Natural killer cell (primary cell): ENCODE measurements at regions of chr12 and their contacts with region 1.

Region 1: DNA sequence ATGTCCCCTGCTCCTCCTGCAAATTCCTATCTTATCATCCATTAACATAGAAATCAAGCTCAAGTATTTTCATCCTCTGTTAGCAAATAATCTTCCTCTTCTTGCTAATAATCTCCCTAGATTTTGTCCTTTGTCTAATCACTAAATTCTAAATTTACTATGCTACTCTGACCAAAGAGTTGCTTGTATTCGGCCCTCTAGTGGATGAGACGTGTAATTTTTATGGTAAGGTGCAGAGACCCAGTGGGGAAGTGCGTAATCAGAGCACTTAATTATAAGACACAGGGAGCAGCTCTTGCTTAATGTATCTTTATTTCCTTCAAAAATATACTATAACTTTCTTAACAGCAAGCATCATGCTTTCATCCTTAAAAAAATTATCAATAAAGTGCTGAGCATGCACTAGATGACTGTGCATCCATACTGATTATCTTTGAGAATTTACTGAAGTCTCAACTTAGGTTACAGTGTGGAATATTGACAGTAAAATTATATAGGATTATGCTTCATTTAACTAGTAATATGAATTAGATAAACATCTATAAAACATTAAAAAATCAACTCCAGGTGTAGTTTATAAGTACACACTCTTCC is 212.6 kb downstream of the SLC16A7 start:
- DNase-seq: peak in 1 of 2 donors; percentile 61
- ATAC-seq: peak; percentile 52 to 78 (median 59)
- H3K4me3 ChIP-seq: no peak overlapping the region
- H3K4me3 Mint-ChIP-seq: no peak overlapping the region
- H3K27ac ChIP-seq: no peak overlapping the region
- H3K27ac Mint-ChIP-seq: no peak overlapping the region
- H3K4me1 ChIP-seq: no peaks in the 10 kb centered on the region
- H3K4me1 Mint-ChIP-seq: peaks cover 0 to 5% of the 10 kb centered on the region in 2 donors
- H3K27me3 ChIP-seq: no peaks in the 10 kb centered on the region
- H3K27me3 Mint-ChIP-seq: no peaks in the 10 kb centered on the region
- CTCF ChIP-seq: peak; percentile 85

Region 2: GRCh38 chr12:59403259-59403932 is 405.0 kb before region 1 on chr12:
- intact Hi-C with region 1: loop called (anchors 2 kb)
- DNase-seq: peak in 1 of 2 donors; percentile 72
- ATAC-seq: peak in 1 of 3 donors; percentile 61
- H3K4me3 ChIP-seq: no peak overlapping the region
- H3K4me3 Mint-ChIP-seq: no peak overlapping the region
- H3K27ac ChIP-seq: no peak overlapping the region
- H3K27ac Mint-ChIP-seq: no peak overlapping the region
- H3K4me1 ChIP-seq: no peaks in the 10 kb centered on the region
- H3K4me1 Mint-ChIP-seq: peaks cover 0 to 5% of the 10 kb centered on the region in 2 donors
- H3K27me3 ChIP-seq: no peaks in the 10 kb centered on the region
- H3K27me3 Mint-ChIP-seq: no peaks in the 10 kb centered on the region
- CTCF ChIP-seq: peak; percentile 63

Region 3: DNA sequence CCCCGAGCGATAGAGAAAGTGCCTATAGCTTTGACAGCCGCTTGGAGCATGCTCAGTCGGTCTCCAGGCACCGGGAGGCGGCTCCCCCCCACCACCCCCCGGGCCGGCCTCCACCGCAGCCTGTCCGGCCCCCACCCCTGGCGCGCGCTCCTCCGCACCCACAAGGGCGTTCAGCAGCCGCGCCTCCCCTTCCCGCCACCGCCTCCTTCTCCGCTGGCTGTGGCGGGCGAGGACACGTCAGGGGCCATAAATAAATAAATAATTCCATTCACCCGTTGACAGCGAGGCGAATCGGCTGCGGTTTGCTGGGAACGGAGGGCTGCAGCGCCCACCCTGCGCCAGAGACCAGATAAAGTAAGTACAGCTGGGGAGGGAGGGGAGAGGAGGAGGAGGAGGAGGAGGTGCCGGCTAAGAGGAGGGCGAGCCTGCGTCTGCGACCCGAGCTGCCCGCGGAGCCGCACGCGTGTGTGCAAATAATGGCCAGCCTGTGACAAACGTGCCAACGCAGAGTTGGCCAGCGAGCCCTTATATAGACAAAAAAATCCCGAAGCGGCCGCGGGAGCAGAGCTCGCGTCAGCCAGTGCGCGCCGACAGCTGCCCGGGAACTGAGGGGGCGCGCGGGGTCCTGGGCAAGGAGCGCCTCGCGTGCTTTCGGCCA is 212.4 kb before region 1 on chr12 and contains the start of gene SLC16A7:
- intact Hi-C with region 1: loop called (anchors 5 kb)
- DNase-seq: peak; percentile 80 to 91
- ATAC-seq: peak; percentile 52 to 77 (median 67)
- H3K4me3 ChIP-seq: peak within 1 kb of the TSS; percentile 93
- H3K4me3 Mint-ChIP-seq: peak within 1 kb of the TSS; percentile 96
- H3K27ac ChIP-seq: peak within 1 kb of the TSS; percentile 96
- H3K27ac Mint-ChIP-seq: peak within 1 kb of the TSS; percentile 93 to 99
- H3K4me1 ChIP-seq: peaks cover 8% of the 10 kb centered on the region
- H3K4me1 Mint-ChIP-seq: peaks cover 49 to 55% of the 10 kb centered on the region in 2 donors
- H3K27me3 ChIP-seq: no peaks in the 10 kb centered on the region
- H3K27me3 Mint-ChIP-seq: no peaks in the 10 kb centered on the region
- CTCF ChIP-seq: no peak
- total RNA-seq, gene SLC16A7: 42.4 to 46.9 (median 43.2) TPM

Region 4: DNA sequence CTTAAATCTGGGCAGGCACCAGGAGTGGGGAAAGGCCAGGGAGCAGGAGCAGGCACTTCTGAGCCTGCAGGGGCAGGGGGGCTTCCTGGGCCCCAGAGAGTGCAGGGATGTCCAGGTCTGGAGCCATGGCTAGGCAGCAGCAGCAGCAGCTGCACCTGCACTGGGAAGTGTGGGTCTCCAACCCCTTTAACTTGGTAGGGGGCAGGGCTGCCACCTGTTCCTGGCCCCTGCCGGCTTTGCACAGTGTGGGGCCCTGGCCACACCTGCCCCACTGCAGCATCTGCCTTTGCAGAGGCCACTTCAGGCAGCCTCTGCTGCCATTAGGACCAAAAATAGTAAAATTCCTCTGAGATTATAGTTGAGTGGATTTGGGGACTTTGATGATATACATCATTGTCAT is 74.0 kb before region 1 on chr12:
- intact Hi-C with region 1: no loop called
- DNase-seq: no peak
- ATAC-seq: no peak
- H3K4me3 ChIP-seq: no peak overlapping the region
- H3K4me3 Mint-ChIP-seq: no peak overlapping the region
- H3K27ac ChIP-seq: no peak overlapping the region
- H3K27ac Mint-ChIP-seq: no peak overlapping the region
- H3K4me1 ChIP-seq: no peaks in the 10 kb centered on the region
- H3K4me1 Mint-ChIP-seq: peaks cover 28% of the 10 kb centered on the region in 2 donors
- H3K27me3 ChIP-seq: no peaks in the 10 kb centered on the region
- H3K27me3 Mint-ChIP-seq: no peaks in the 10 kb centered on the region
- CTCF ChIP-seq: no peak